Pancreas (tissue), 10 donors: ENCODE measurements at regions of chr1 and their contacts with region 1.

Region 1: GRCh38 chr1:20696397-20697329 is 21.1 kb downstream of the KIF17 start:
- DNase-seq: peak; percentile 70 to 94 (median 82)
- ATAC-seq: peak; percentile 90 to 97 (median 96)
- H3K4me3 ChIP-seq: peak overlapping the region; percentile 33 to 63 (median 46)
- H3K27ac ChIP-seq: peak overlapping the region in 3 of 4 donors; percentile 34 to 64 (median 35)
- H3K4me1 ChIP-seq: peaks cover 0 to 3% (median 0%) of the 10 kb centered on the region in 3 donors
- H3K27me3 ChIP-seq: no peaks in the 10 kb centered on the region
- CTCF ChIP-seq: peak; percentile 77 to 91 (median 81)

Region 2: GRCh38 chr1:20343149-20343937 is 353.3 kb before region 1 on chr1:
- intact Hi-C with region 1: no loop called
- DNase-seq: peak in 1 of 6 donors; percentile 52
- ATAC-seq: peak in 3 of 4 donors; percentile 21 to 91 (median 44)
- H3K4me3 ChIP-seq: no peak overlapping the region
- H3K27ac ChIP-seq: no peak overlapping the region
- H3K4me1 ChIP-seq: no peaks in the 10 kb centered on the region
- H3K27me3 ChIP-seq: no peaks in the 10 kb centered on the region
- CTCF ChIP-seq: no peak

Region 3: DNA sequence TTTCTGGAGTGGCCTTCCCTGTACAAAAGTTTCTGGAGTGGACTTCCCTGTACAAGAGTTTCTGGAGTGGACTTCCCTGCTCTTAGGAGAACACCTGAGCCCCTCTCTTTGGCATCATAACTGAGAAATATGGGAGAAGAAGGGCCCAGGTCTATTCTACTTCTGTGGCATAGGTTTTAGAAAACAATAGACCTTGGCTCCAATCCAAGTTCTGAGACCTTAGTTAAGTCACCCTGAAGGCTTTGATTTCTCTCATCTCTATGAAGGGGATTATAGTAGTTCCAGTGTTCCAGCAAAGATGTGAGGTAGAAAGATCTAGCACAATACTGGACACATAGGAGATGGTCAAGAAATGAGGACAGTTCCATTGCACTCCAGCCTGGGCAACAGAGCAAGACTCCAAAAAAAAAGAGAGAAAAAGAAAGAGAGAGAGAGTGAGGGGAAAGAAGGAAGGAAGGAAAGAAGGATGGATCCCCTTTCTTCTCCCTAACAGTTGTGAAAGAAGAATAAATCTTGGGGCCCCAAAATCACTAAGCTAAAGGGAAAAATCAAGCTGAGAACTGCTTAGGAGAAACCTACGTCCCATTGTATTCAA is 493.3 kb after region 1 on chr1:
- intact Hi-C with region 1: loop called in 2 of 3 experiments (anchors 5 to 10 kb)
- DNase-seq: no peak
- ATAC-seq: no peak
- H3K4me3 ChIP-seq: no peak overlapping the region
- H3K27ac ChIP-seq: no peak overlapping the region
- H3K4me1 ChIP-seq: no peaks in the 10 kb centered on the region
- H3K27me3 ChIP-seq: no peaks in the 10 kb centered on the region
- CTCF ChIP-seq: no peak

Region 4: GRCh38 chr1:21198929-21199328 is 502.3 kb after region 1 on chr1:
- intact Hi-C with region 1: loop called in 2 of 3 experiments (anchors 5 to 10 kb)
- DNase-seq: no peak
- ATAC-seq: no peak
- H3K4me3 ChIP-seq: no peak overlapping the region
- H3K27ac ChIP-seq: no peak overlapping the region
- H3K4me1 ChIP-seq: no peaks in the 10 kb centered on the region
- H3K27me3 ChIP-seq: no peaks in the 10 kb centered on the region
- CTCF ChIP-seq: no peak

Region 5: GRCh38 chr1:21318714-21319159 is 622.1 kb after region 1 on chr1:
- intact Hi-C with region 1: no loop called
- DNase-seq: peak; percentile 83 to 95 (median 90)
- ATAC-seq: peak; percentile 49 to 55 (median 52)
- H3K4me3 ChIP-seq: no peak overlapping the region
- H3K27ac ChIP-seq: peak overlapping the region; percentile 46 to 74 (median 54)
- H3K4me1 ChIP-seq: peaks cover 54 to 68% (median 62%) of the 10 kb centered on the region in 3 donors
- H3K27me3 ChIP-seq: no peaks in the 10 kb centered on the region
- CTCF ChIP-seq: no peak